ENCODE measurements at regions of chr20 and their contacts with region 1.

Region 1: DNA sequence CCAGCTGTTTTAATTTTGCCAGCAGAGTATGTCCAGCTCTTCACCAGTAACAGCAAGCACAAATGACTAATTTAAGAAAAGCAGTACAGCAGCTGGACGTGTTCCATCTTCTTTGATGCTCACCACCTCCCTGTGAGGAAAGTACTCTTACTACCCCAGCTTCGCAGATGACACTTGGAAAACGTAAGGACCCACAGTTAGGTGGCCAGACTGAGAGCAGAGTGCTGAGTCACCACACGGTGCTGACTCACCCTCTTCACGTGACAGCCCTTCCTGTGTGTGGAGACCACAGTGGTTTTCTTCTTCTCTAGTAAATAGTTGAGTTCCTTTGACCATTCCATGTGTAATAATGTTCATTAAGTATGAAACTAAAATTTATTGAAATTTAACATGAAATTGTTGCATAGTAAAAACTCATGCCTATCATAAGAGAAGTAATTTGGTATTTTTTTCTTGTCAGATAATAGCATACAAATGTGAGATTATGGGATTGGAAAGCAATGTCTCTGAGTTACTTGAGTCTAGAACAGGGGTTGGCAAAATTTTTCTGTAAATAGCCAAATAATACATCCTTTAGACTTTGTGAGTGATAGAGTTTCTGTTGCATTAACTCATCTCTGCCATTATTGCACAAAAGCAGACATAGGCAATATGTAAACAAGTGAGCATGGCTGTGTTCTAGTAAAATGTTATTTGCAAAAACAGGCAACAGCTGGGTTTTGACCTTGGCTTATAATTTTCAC is 76.6 kb downstream of the SLX4IP start:
- DNase-seq: peak; percentile 95 to 99 (median 98)
- H3K4me3 ChIP-seq: peak overlapping the region in 1 of 3 experiments; percentile 44
- H3K4me3 Mint-ChIP-seq: peak overlapping the region; percentile 34 to 77
- H3K27ac ChIP-seq: peak overlapping the region; percentile 12 to 79
- H3K27ac Mint-ChIP-seq: peak overlapping the region; percentile 88 to 95 (median 93)
- H3K4me1 ChIP-seq: peaks cover 44 to 54% of the 10 kb centered on the region in 2 donors
- H3K4me1 Mint-ChIP-seq: peaks cover 58% of the 10 kb centered on the region
- H3K27me3 ChIP-seq: no peaks in the 10 kb centered on the region
- H3K27me3 Mint-ChIP-seq: peaks cover 2 to 3% (median 2%) of the 10 kb centered on the region in 3 donors
- CTCF ChIP-seq: no peak

Region 2: GRCh38 chr20:10434832-10435812 is 76.6 kb before region 1 on chr20 and contains the start of gene SLX4IP:
- intact Hi-C with region 1: loop called in 1 of 2 experiments (anchors 10 kb)
- DNase-seq: peak; percentile 91 to 95 (median 94)
- H3K4me3 ChIP-seq: peak within 1 kb of the TSS; percentile 76 to 93 (median 88)
- H3K4me3 Mint-ChIP-seq: peak within 1 kb of the TSS; percentile 92 to 94
- H3K27ac ChIP-seq: peak within 1 kb of the TSS; percentile 84 to 91
- H3K27ac Mint-ChIP-seq: peak within 1 kb of the TSS; percentile 92 to 96 (median 95)
- H3K4me1 ChIP-seq: peaks cover 21 to 33% of the 10 kb centered on the region in 2 donors
- H3K4me1 Mint-ChIP-seq: peaks cover 40% of the 10 kb centered on the region
- H3K27me3 ChIP-seq: no peaks in the 10 kb centered on the region
- H3K27me3 Mint-ChIP-seq: no peaks in the 10 kb centered on the region
- CTCF ChIP-seq: no peak
- polyA plus RNA-seq, gene SLX4IP: 0.76 to 2.5 (median 1.1) TPM

Region 3: DNA sequence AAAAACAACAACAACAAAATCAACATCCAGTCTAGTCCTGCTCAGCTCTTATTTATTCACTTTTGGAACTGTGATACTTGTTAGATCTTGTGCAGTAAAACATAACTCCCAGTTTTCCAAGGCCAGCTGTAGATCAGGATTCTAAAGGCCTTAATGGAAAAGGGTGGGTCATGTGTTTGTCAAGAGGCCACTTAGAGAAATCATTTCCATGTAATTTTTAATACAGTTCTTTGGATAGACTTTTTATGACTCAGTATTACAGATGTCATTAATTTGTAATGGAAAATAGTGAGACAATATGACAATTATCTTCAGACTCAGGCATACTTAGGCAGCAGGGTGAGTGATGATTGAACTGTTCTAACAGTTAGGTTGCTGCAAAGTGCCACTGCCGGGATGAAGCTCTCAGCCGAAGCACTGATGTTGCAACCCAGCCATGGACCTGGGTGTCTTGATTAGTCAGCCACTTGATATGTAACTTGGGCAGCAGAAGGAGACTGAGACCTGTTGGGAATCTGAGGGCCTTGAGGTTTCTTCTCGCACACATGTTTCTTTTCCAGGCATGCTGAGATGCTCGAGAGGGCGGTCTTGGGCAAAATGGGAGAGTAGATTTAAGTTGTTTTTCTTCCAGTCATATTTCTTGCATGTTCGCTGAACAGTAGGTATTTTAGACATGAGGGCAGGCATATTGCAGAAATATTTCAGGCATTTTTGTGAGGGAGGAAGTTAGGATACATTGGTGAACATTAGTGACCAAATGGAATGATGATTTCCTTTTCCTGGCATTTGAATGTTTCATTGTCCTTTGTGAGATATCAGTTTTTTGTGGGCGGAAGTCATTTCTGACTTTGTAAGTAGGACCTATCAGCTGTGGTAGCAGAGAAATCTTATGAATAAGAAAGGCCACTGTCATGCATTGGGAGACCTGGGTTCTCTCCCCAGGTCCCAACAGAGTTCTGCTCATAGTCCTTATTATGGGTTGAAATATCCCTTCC is 24.2 kb before region 1 on chr20:
- intact Hi-C with region 1: loop called in 1 of 2 experiments (anchors 1 kb)
- DNase-seq: peak; percentile 70 to 90 (median 82)
- H3K4me3 ChIP-seq: peak overlapping the region in 1 of 3 experiments; percentile 13
- H3K4me3 Mint-ChIP-seq: no peak overlapping the region
- H3K27ac ChIP-seq: peak overlapping the region; percentile 41 to 79
- H3K27ac Mint-ChIP-seq: peak overlapping the region; percentile 81 to 96 (median 92)
- H3K4me1 ChIP-seq: peaks cover 43 to 51% of the 10 kb centered on the region in 2 donors
- H3K4me1 Mint-ChIP-seq: peaks cover 52% of the 10 kb centered on the region
- H3K27me3 ChIP-seq: no peaks in the 10 kb centered on the region
- H3K27me3 Mint-ChIP-seq: no peaks in the 10 kb centered on the region
- CTCF ChIP-seq: no peak

Measured in CD14-positive monocyte (primary cell).